Dorsolateral prefrontal cortex (tissue), 120 donors: ENCODE measurements at regions of chr2 and their contacts with region 1.

Region 1: GRCh38 chr2:241224018-241224850 is 35.8 kb downstream of the ANO7 start:
- DNase-seq: peak; percentile 34 to 94 (median 91)
- H3K4me3 ChIP-seq: peak overlapping the region in 38 of 59 donors; percentile 2 to 53 (median 26)
- H3K27ac ChIP-seq: peak overlapping the region; percentile 59 to 99 (median 95)
- H3K27me3 ChIP-seq: no peaks in the 10 kb centered on the region
- CTCF ChIP-seq: peak in 11 of 56 donors; percentile 5 to 41 (median 17)

Region 2: DNA sequence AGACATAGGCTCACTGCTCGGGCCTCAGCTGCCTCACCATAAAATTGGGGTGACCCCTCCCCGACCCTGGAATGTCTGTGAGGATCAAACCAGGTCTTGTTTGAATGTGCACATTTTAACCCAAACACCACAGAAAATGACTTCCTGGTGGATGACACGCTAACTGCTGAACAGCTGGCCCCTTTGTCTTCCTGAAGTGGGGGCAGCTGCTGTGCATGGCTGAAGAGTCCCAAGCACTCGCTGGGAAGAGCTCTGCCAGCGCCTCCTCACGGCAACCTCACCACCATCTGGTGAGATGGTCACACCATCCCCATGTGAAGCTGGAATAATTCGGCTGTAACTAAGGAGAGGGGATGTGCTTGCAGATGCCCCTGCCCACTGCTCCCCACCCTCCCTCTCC is 498.6 kb before region 1 on chr2:
- intact Hi-C with region 1: no loop called
- DNase-seq: no peak
- H3K4me3 ChIP-seq: no peak overlapping the region
- H3K27ac ChIP-seq: peak overlapping the region in 24 of 59 donors; percentile 2 to 67 (median 34)
- H3K27me3 ChIP-seq: no peaks in the 10 kb centered on the region
- CTCF ChIP-seq: no peak

Region 3: GRCh38 chr2:241041589-241042158 is 182.6 kb before region 1 on chr2:
- intact Hi-C with region 1: no loop called
- DNase-seq: no peak
- H3K4me3 ChIP-seq: no peak overlapping the region
- H3K27ac ChIP-seq: no peak overlapping the region
- H3K27me3 ChIP-seq: peaks cover 0 to 9% (median 0%) of the 10 kb centered on the region in 45 donors
- CTCF ChIP-seq: no peak

Region 4: GRCh38 chr2:241102239-241102803 is 121.9 kb before region 1 on chr2 and contains the start of gene MTERF4:
- intact Hi-C with region 1: loop called in 1 of 2 experiments (anchors 5 kb)
- DNase-seq: peak; percentile 74 to 93 (median 86)
- H3K4me3 ChIP-seq: peak within 1 kb of the TSS; percentile 67 to 99 (median 94)
- H3K27ac ChIP-seq: peak within 1 kb of the TSS; percentile 41 to 97 (median 83)
- H3K27me3 ChIP-seq: no peaks in the 10 kb centered on the region
- CTCF ChIP-seq: peak in 31 of 56 donors; percentile 3 to 59 (median 29)
- total RNA-seq, gene MTERF4: 34.2 to 84.6 (median 58.4) TPM

Region 5: DNA sequence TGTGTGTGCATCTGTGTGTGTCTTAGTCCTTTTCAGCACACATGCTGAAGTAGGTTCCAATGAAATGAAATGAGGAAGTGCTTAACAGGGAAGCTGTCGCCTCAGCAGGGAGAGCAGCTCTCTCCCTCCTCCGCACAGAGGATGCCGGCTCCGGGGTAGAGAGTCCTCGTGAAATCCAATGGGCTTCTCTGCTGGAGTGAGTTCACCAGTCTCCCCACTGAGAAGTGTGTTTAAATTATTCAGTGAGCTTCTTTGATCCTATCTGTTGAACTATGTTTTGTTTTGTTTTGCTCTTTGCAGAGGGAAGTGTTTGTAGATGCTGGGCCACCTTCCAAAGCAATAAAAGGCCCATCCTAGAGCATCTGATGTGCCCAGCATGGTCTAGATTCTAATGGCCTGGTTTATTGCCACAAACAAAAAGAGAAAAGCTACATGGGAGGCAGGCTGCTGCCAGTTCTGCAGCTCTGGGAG is 67.2 kb before region 1 on chr2:
- intact Hi-C with region 1: loop called in 1 of 2 experiments (anchors 5 kb)
- DNase-seq: peak in 7 of 10 donors; percentile 32 to 74 (median 57)
- H3K4me3 ChIP-seq: no peak overlapping the region
- H3K27ac ChIP-seq: peak overlapping the region in 36 of 59 donors; percentile 2 to 81 (median 40)
- H3K27me3 ChIP-seq: no peaks in the 10 kb centered on the region
- CTCF ChIP-seq: no peak